Activated B cell treated with CpG ODN at 0.5 μM for 24 hours (primary cell): ENCODE measurements at regions of chr9 and their contacts with region 1.

Region 1: GRCh38 chr9:129884220-129885017 is 49.2 kb downstream of the USP20 start:
- DNase-seq: peak; percentile 92
- ATAC-seq: peak; percentile 61
- H3K4me3 Mint-ChIP-seq: peak overlapping the region; percentile 84
- H3K27ac Mint-ChIP-seq: peak overlapping the region; percentile 98
- H3K4me1 Mint-ChIP-seq: peaks cover 59% of the 10 kb centered on the region
- H3K27me3 Mint-ChIP-seq: no peaks in the 10 kb centered on the region
- CTCF ChIP-seq: no peak

Region 2: DNA sequence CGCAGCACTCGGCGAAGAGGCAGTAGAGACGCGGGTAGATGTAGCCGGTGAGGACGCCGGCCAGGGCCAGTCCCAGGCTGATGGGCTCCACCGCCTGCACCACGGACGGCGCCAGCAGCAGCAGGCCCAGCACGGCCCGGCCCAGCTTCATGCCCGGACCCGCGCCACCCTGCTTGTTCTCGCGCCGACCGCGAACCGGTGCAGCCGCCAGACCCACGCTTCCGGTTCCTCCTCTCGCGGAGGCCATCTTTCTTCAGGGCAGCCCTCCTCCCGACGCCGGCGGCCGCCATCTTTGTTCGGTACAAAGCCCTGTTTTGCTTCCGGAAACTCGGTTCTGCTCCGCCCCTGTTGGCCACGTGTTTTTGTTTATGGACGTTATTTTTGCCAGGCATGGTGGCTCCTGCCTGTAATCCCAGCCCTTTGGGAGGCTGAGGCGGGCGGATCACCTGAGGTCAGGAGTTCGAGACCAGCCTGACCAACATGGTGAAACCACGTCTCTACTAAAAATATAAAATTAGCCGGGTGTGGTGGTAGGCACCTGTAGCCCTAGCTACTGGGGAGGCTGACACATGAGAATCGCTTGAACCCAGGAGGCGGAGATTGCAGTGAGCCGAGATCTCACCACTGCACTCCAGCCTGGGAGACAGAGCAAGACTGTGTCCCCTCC is 60.4 kb before region 1 on chr9 and contains the start of gene TOR1A:
- CTCF ChIA-PET with region 1: no interaction called
- POLR2A ChIA-PET with region 1: interaction called, 3 read pairs
- intact Hi-C with region 1: loop called (anchors 1 kb)
- DNase-seq: peak; percentile 84
- ATAC-seq: peak; percentile 92
- H3K4me3 Mint-ChIP-seq: peak within 1 kb of the TSS; percentile 85
- H3K27ac Mint-ChIP-seq: peak within 1 kb of the TSS; percentile 76
- H3K4me1 Mint-ChIP-seq: peaks cover 13% of the 10 kb centered on the region
- H3K27me3 Mint-ChIP-seq: no peaks in the 10 kb centered on the region
- CTCF ChIP-seq: no peak
- total RNA-seq, gene TOR1A: 28.5 and 29.5 TPM in 2 replicates

Region 3: DNA sequence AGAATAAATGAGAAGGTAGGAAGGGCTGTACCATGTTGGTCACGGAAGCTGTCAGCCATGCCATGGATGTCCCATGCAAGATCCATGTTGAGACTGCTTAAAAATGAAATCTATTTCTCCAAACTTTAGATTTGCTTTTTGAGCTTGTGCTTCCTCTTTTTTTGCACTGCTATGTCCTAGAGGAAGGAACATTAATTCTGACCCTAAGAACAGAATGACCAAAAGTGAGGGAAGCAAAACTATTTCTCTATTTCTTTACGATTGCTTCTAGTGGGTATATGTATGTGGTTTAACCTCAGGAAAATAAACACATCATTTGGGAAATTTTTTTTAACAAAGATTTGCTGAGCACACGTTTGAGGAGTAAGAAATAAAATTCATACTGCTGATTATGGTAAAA is 35.4 kb after region 1 on chr9:
- CTCF ChIA-PET with region 1: interaction called, 3 read pairs
- POLR2A ChIA-PET with region 1: interaction called, 6 read pairs
- intact Hi-C with region 1: loop called (anchors 2 kb)
- DNase-seq: no peak
- ATAC-seq: no peak
- H3K4me3 Mint-ChIP-seq: no peak overlapping the region
- H3K27ac Mint-ChIP-seq: no peak overlapping the region
- H3K4me1 Mint-ChIP-seq: peaks cover 24% of the 10 kb centered on the region
- H3K27me3 Mint-ChIP-seq: no peaks in the 10 kb centered on the region
- CTCF ChIP-seq: no peak

Region 4: DNA sequence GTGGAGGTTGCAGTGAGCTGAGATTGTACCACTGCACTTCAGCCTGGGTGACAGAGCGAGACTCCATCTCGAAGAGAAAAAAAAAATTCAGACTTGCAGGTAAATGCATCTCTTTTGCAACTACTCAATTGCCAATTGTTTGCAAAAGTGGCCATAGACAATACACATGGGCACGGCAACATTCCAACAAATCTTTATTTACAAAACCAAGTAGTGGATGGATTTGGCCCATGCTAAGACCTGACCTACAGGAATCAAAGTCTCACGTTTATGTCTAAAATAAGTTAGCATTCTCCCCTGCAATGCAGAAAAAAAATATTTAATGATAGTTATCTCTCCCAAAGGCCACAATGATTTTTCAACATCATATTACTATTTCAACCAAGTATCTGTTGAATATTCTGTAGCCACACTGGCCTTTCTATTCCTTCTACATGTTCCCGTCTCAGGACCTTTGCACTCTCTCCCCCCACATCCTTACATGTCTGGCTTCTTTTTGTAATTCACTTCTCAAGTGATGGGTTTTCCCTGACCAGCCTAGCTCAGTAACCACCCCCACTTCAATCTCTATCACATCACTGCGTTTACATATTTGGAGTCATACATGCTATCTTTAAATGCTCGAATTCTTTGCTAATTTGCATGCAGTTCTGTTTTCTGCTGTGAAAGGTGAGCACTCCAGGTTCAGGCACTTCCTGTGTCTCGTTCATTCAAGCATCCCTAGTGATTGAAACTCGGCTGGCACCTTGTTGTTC is 104.4 kb after region 1 on chr9:
- CTCF ChIA-PET with region 1: no interaction called
- POLR2A ChIA-PET with region 1: interaction called, 93 read pairs
- intact Hi-C with region 1: loop called (anchors 1 kb)
- DNase-seq: no peak
- ATAC-seq: peak; percentile 70
- H3K4me3 Mint-ChIP-seq: peak overlapping the region; percentile 60
- H3K27ac Mint-ChIP-seq: peak overlapping the region; percentile 89
- H3K4me1 Mint-ChIP-seq: peaks cover 93% of the 10 kb centered on the region
- H3K27me3 Mint-ChIP-seq: no peaks in the 10 kb centered on the region
- CTCF ChIP-seq: no peak

Region 5: DNA sequence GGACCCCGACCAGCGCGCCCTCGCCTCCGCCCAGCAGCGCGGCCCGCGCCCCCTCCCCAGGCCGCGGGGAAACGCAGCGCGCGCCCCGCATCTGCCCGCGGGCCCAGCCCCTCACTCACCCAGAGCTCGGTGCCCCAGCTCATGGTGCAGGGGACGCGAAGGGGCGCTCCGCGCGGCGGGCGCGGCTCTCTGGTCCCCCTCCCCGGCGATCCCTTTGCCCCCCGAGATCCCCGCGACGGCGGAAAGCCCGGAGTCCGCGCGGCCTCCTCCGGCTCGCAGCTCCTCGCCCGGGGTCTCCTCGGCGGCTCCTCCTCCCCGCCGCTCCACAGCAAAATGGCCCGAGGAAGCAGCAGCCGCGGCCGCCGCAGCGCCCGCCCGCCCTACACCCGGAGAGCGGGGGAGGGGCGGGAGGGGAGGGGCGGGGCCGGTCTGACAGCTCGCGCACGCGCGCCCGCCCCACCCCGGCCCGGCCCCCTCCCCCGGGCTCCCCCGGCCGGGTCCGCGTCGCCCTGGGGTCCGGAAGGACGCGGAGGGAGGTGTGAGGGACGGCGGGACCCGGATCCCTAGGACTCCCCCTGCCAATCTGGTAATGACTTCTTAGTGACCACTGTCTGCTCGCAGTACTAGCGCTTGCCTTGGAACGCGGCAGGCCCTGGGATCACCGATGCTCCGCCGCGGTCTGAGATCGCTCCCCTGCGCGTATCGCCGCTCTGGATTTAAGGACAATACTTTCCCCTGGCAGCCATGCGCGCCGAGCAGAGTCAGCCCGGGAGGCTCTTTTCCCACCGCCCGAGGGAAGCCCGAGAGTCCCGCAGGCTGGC is 158.6 kb after region 1 on chr9 and contains the start of gene FNBP1:
- CTCF ChIA-PET with region 1: interaction called, 4 read pairs
- POLR2A ChIA-PET with region 1: interaction called, 109 read pairs
- intact Hi-C with region 1: loop called (anchors 1 kb)
- DNase-seq: peak; percentile 77
- ATAC-seq: peak; percentile 71
- H3K4me3 Mint-ChIP-seq: peak within 1 kb of the TSS; percentile 99
- H3K27ac Mint-ChIP-seq: peak within 1 kb of the TSS; percentile 99
- H3K4me1 Mint-ChIP-seq: peaks cover 54% of the 10 kb centered on the region
- H3K27me3 Mint-ChIP-seq: no peaks in the 10 kb centered on the region
- CTCF ChIP-seq: no peak
- total RNA-seq, gene FNBP1: 454 and 501 TPM in 2 replicates

Region 6: DNA sequence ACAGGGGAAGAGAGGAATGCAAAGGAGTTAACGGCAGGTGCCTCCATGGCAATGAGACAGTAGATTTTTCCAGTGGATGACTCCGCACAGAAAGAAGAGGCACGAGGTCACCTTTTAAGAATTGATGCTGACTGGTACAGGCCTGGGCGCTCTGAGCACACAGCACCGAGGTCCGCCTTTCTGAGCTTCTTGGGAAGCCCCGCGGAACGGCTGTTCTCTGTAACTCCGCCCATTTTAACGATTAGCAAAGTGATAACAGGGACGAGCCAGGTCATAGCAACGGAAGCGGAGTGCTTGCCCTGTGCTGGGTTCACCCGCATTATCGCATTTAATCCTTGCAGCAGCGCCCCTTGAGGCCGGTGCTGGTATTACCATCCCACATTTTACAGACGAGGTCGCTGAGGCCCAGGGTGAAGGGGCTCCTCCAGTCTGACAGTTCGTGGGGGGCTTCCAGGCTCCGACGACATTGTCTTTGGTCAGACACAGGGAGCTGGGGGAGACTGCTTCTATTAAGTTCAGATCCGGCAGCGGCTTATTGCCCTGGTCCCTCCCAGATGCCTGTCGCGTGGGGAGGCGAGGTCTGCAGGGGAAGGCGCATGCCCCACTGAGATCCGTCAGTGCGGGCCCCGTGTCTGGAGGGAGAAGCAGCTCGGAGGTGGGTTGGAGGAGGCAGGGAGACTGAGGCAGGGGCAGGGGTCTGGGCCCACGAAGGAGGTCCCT is 358.8 kb after region 1 on chr9:
- CTCF ChIA-PET with region 1: no interaction called
- POLR2A ChIA-PET with region 1: no interaction called
- intact Hi-C with region 1: loop called (anchors 1 kb)
- DNase-seq: peak; percentile 72
- ATAC-seq: peak; percentile 40
- H3K4me3 Mint-ChIP-seq: peak overlapping the region; percentile 59
- H3K27ac Mint-ChIP-seq: peak overlapping the region; percentile 50
- H3K4me1 Mint-ChIP-seq: peaks cover 32% of the 10 kb centered on the region
- H3K27me3 Mint-ChIP-seq: peaks cover 3% of the 10 kb centered on the region
- CTCF ChIP-seq: peak; percentile 33